A673 (cell line): ENCODE measurements at regions of chr9 and their contacts with region 1.

Region 1: GRCh38 chr9:90559075-90560073 is 83.2 kb downstream of the DIRAS2 start:
- DNase-seq: no peak
- H3K4me3 ChIP-seq: no peak overlapping the region
- H3K27ac ChIP-seq: no peak overlapping the region
- H3K4me1 ChIP-seq: no peaks in the 10 kb centered on the region
- H3K27me3 ChIP-seq: no peaks in the 10 kb centered on the region
- CTCF ChIP-seq: no peak

Region 2: DNA sequence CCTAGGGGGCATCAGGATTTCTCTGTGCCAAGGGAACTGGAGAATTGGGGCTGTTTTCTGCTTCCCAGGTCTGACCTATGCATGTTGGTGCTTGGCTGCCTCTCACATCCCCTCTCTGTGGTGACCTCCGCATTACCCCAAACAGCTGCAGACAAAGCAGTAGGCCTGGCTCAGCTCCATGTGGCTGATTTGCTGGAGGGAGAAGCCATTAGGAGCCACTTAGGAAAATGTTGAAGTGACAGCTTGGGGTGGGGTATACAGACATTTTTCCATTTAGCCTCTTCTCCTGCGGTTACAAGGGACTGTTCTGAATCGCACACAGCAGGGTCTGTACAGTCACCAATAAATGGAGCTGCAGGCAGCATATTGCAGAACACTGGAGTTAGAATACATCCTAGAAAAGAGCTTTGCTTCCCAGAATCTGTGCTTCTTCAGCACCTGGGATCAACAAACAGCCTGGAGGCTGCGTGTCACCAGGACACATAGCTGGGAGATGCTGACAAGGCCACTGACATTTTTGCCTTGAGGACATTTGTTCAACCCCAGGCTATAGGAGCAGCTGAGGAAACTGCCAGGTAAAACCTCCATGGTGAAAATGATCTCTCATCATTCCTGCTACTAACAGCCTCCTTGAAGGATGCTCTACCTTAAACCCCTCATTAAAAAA is 252.1 kb before region 1 on chr9:
- CTCF ChIA-PET with region 1: no interaction called
- POLR2A ChIA-PET with region 1: no interaction called
- intact Hi-C with region 1: no loop called
- DNase-seq: no peak
- H3K4me3 ChIP-seq: no peak overlapping the region
- H3K27ac ChIP-seq: no peak overlapping the region
- H3K4me1 ChIP-seq: no peaks in the 10 kb centered on the region
- H3K27me3 ChIP-seq: no peaks in the 10 kb centered on the region
- CTCF ChIP-seq: no peak

Region 3: DNA sequence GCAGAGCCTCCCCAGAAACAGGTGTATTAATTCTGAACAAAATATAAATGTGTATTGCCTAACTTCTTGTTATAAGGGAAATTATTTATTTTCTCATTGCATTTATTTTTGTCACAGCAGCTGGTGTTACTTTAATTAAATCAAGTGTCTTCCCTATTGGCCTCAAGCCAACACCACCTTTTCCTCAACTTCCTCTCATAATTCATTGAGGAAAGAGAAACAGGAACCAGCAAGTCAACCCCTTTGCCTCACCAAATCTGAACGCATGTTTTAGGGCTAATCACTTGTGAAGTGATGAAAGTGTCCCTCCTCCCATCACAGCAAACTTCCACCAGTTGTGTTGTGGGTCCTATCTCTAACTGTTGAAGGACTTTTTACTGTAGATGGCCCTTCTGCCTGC is 10.1 kb after region 1 on chr9:
- CTCF ChIA-PET with region 1: no interaction called
- POLR2A ChIA-PET with region 1: no interaction called
- intact Hi-C with region 1: no loop called
- DNase-seq: no peak
- H3K4me3 ChIP-seq: no peak overlapping the region
- H3K27ac ChIP-seq: no peak overlapping the region
- H3K4me1 ChIP-seq: no peaks in the 10 kb centered on the region
- H3K27me3 ChIP-seq: no peaks in the 10 kb centered on the region
- CTCF ChIP-seq: no peak

Region 4: DNA sequence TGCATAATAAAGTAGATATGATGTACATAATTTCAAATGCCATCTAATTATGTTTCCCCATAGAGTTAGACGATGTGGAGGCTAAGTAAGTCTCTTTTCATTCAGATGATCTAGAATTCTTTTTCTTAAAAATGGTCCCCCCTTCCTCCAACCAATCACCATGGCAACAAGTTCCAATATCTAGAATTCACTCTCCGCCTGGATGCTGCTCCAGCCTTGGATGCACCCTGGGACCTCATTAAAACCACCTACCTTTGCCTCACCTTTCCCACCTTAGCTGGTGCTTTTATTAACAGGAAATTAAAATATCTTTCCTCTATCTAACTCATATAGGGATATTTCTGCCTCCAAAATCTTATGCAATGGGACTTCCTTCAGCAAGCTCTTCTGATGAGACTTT is 34.3 kb after region 1 on chr9:
- CTCF ChIA-PET with region 1: no interaction called
- POLR2A ChIA-PET with region 1: no interaction called
- intact Hi-C with region 1: loop called (anchors 1 kb)
- DNase-seq: no peak
- H3K4me3 ChIP-seq: no peak overlapping the region
- H3K27ac ChIP-seq: no peak overlapping the region
- H3K4me1 ChIP-seq: no peaks in the 10 kb centered on the region
- H3K27me3 ChIP-seq: no peaks in the 10 kb centered on the region
- CTCF ChIP-seq: no peak